ENCODE measurements at regions of chr18 and their contacts with region 1.

Region 1: DNA sequence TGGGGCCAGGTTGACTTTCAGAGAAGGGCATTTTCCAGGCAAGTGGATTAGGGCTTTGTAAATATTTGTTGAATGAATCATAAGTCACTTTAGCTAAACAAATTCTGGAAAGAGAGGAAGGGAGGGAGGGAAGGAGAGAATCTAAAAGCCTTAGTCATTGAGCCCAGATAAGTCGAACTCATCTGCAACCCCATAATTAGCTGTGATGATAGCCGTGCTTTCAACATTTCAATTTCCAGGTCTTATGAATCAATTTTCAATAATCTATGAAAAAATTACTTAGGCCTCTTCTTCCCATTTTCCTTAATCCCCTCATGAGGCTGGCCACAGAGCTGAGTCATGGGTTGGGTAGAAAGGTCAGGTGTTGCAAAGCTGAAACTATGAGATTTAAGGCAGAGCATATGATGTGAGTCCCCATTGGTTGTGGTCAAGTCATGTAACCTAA is 111.9 kb upstream of the MAPRE2 start:
- DNase-seq: peak; percentile 94
- ATAC-seq: peak; percentile 77
- H3K4me3 ChIP-seq: peak overlapping the region in 2 of 3 experiments; percentile 44 to 71; a peak in 1 of 6 replicates
- H3K27ac ChIP-seq: peak overlapping the region; percentile 98
- H3K4me1 ChIP-seq: peaks cover 86% of the 10 kb centered on the region
- H3K27me3 ChIP-seq: no peaks in the 10 kb centered on the region
- CTCF ChIP-seq: no peak
- EP300 ChIP-seq: peak; percentile 53 to 93; a peak in 3 of 4 replicates
- POLR2A ChIP-seq: no peak
- RAD21 ChIP-seq: no peak

Region 2: GRCh38 chr18:34787931-34788532 is 141.3 kb before region 1 on chr18:
- CTCF ChIA-PET with region 1: no interaction called
- POLR2A ChIA-PET with region 1: no interaction called
- in situ Hi-C with region 1: no loop called
- intact Hi-C with region 1: no loop called
- DNase-seq: peak; percentile 60
- ATAC-seq: peak; percentile 67
- H3K4me3 ChIP-seq: no peak overlapping the region
- H3K27ac ChIP-seq: no peak overlapping the region
- H3K4me1 ChIP-seq: no peaks in the 10 kb centered on the region
- H3K27me3 ChIP-seq: no peaks in the 10 kb centered on the region
- CTCF ChIP-seq: peak; percentile 77
- EP300 ChIP-seq: no peak
- POLR2A ChIP-seq: no peak
- RAD21 ChIP-seq: 0 out of 2 replicates have a peak, but pooled peaks have one; percentile 19

Region 3: GRCh38 chr18:34880882-34881834 is 48.2 kb before region 1 on chr18:
- CTCF ChIA-PET with region 1: no interaction called
- POLR2A ChIA-PET with region 1: interaction called, 4 read pairs
- in situ Hi-C with region 1: no loop called
- intact Hi-C with region 1: loop called (anchors 5 kb)
- DNase-seq: peak; percentile 53
- ATAC-seq: peak; percentile 48; the same call in 2 of the 3 replicates
- H3K4me3 ChIP-seq: no peak overlapping the region
- H3K27ac ChIP-seq: no peak overlapping the region
- H3K4me1 ChIP-seq: peaks cover 10% of the 10 kb centered on the region
- H3K27me3 ChIP-seq: no peaks in the 10 kb centered on the region
- CTCF ChIP-seq: peak; percentile 61
- EP300 ChIP-seq: no peak
- POLR2A ChIP-seq: no peak
- RAD21 ChIP-seq: peak; percentile 33; the same call in 1 of the 2 replicates

Region 4: GRCh38 chr18:34892379-34892778 is 37.0 kb before region 1 on chr18:
- CTCF ChIA-PET with region 1: no interaction called
- POLR2A ChIA-PET with region 1: no interaction called
- in situ Hi-C with region 1: no loop called
- intact Hi-C with region 1: no loop called
- DNase-seq: no peak
- ATAC-seq: no peak
- H3K4me3 ChIP-seq: no peak overlapping the region
- H3K27ac ChIP-seq: no peak overlapping the region
- H3K4me1 ChIP-seq: peaks cover 17% of the 10 kb centered on the region
- H3K27me3 ChIP-seq: no peaks in the 10 kb centered on the region
- CTCF ChIP-seq: no peak
- EP300 ChIP-seq: no peak
- POLR2A ChIP-seq: no peak
- RAD21 ChIP-seq: no peak

Region 5: DNA sequence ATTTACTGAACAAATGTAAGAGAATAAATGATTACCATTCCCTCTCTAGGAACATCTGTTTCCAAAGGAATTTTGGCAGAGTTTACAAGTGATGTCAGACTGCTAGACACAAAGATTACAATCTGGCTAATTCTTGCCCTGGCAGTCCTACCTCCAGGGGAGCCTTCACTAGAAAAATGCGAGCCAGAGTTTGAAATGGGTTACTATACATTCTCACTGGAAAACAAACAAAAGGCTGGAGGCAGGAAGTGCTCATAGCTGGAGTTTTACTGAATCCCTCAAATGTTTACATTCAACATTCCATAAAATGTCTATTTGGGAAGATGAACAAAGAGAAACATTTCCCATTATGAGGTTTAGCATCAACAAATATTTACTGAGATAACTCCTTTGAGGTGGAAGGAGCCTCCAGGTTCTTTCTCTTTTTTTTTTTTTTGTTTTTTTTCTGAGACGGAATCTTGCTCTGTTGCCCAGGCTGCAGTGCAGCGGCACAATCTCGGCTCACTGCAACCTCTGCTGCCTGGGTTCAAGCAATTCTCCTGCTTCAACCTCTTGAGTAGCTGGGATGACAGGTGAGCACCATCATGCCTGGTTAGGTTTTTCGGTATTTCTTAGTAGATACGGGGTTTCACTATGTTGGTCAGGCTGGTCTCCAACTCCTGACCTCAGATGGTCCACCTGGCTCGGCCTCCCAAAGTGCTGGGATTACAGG is 17.2 kb before region 1 on chr18:
- CTCF ChIA-PET with region 1: no interaction called
- POLR2A ChIA-PET with region 1: interaction called, 65 read pairs
- in situ Hi-C with region 1: no loop called
- intact Hi-C with region 1: loop called (anchors 1 kb)
- DNase-seq: peak; percentile 95
- ATAC-seq: peak; percentile 91
- H3K4me3 ChIP-seq: no peak overlapping the region
- H3K27ac ChIP-seq: peak overlapping the region; percentile 60
- H3K4me1 ChIP-seq: peaks cover 63% of the 10 kb centered on the region
- H3K27me3 ChIP-seq: no peaks in the 10 kb centered on the region
- CTCF ChIP-seq: no peak
- EP300 ChIP-seq: peak in 1 of 2 experiments; percentile 87; a peak in 2 of 4 replicates
- POLR2A ChIP-seq: no peak
- RAD21 ChIP-seq: no peak; the same call in 1 of the 2 replicates

Region 6: GRCh38 chr18:34918856-34919255 is 10.5 kb before region 1 on chr18:
- CTCF ChIA-PET with region 1: no interaction called
- POLR2A ChIA-PET with region 1: interaction called, 65 read pairs
- in situ Hi-C with region 1: no loop called
- intact Hi-C with region 1: no loop called
- DNase-seq: peak; percentile 64
- ATAC-seq: peak; percentile 73
- H3K4me3 ChIP-seq: peak overlapping the region in 1 of 3 experiments; percentile 8; a peak in 1 of 6 replicates
- H3K27ac ChIP-seq: peak overlapping the region; percentile 56
- H3K4me1 ChIP-seq: peaks cover 58% of the 10 kb centered on the region
- H3K27me3 ChIP-seq: no peaks in the 10 kb centered on the region
- CTCF ChIP-seq: no peak
- EP300 ChIP-seq: no peak
- POLR2A ChIP-seq: no peak
- RAD21 ChIP-seq: no peak

Region 7: GRCh38 chr18:34957119-34957863 is 27.9 kb after region 1 on chr18:
- CTCF ChIA-PET with region 1: no interaction called
- POLR2A ChIA-PET with region 1: interaction called, 8 read pairs
- in situ Hi-C with region 1: no loop called
- intact Hi-C with region 1: loop called (anchors 2 kb)
- DNase-seq: peak; percentile 91
- ATAC-seq: peak; percentile 82
- H3K4me3 ChIP-seq: peak overlapping the region in 1 of 3 experiments; percentile 1; a peak in 1 of 6 replicates
- H3K27ac ChIP-seq: peak overlapping the region; percentile 32
- H3K4me1 ChIP-seq: peaks cover 52% of the 10 kb centered on the region
- H3K27me3 ChIP-seq: no peaks in the 10 kb centered on the region
- CTCF ChIP-seq: no peak
- EP300 ChIP-seq: peak in 1 of 2 experiments; percentile 53; a peak in 1 of 4 replicates
- POLR2A ChIP-seq: no peak
- RAD21 ChIP-seq: no peak

Measured in HepG2 (cell line).